CD4-positive, alpha-beta memory T cell (primary cell): ENCODE measurements at regions of chr5 and their contacts with region 1.

Region 1: DNA sequence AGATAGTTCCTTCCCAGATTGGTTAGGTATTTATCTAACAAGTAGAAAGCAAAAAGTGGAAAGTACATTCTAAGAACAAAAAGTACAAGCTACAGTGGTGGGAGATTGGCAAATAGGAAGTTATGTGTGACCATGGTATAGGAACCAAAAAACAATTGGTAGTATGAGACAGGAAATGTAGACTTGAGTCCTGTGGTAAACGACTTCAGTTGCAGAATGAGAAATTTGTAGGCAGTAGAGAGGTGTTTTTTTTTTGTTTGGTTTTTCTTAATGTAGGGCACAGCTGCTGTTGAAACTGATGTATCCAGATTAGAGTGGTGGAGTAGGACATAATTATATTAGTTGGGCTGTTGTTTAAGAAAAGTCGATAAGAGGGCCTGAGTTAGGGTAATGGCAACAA is 72.0 kb downstream of the CCNH start:
- DNase-seq: peak in 4 of 5 donors; percentile 50 to 75 (median 63)
- H3K4me3 ChIP-seq: no peak overlapping the region
- H3K4me3 Mint-ChIP-seq: peak overlapping the region; percentile 59 to 84 (median 74)
- H3K27ac ChIP-seq: peak overlapping the region; percentile 56
- H3K27ac Mint-ChIP-seq: peak overlapping the region; percentile 65 to 96 (median 85)
- H3K4me1 ChIP-seq: peaks cover 29% of the 10 kb centered on the region
- H3K4me1 Mint-ChIP-seq: peaks cover 16 to 34% (median 22%) of the 10 kb centered on the region in 4 donors
- H3K27me3 ChIP-seq: no peaks in the 10 kb centered on the region
- H3K27me3 Mint-ChIP-seq: no peaks in the 10 kb centered on the region

Region 2: DNA sequence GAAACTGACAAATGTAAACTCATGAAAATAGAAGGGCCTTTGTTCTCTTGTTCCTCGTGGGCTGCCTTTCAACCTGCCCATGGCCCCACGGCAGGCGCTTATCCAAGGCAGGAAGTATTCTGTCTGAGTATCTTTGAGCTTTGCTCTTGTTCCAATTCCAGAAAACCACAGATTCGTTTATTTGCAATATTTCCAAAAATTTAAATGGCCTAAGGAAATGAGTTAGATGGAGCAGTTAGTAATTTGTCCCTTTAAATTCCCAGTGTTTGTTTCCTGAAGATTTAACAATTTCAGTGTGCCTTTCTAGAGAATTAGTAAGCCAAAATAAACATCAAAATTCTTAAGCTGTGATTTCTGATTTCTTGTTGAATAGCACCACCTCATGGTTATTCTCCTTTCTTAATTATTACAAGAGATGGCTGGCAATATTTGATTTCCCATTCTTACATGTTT is 372.4 kb before region 1 on chr5:
- CTCF ChIA-PET with region 1: no interaction called
- POLR2A ChIA-PET with region 1: no interaction called
- intact Hi-C with region 1: loop called (anchors 2 kb)
- DNase-seq: peak in 4 of 5 donors; percentile 21 to 25 (median 24)
- H3K4me3 ChIP-seq: no peak overlapping the region
- H3K4me3 Mint-ChIP-seq: no peak overlapping the region
- H3K27ac ChIP-seq: no peak overlapping the region
- H3K27ac Mint-ChIP-seq: peak overlapping the region in 1 of 7 donors; percentile 24
- H3K4me1 ChIP-seq: no peaks in the 10 kb centered on the region
- H3K4me1 Mint-ChIP-seq: peaks cover 0 to 10% (median 5%) of the 10 kb centered on the region in 4 donors
- H3K27me3 ChIP-seq: no peaks in the 10 kb centered on the region
- H3K27me3 Mint-ChIP-seq: peaks cover 2 to 5% of the 10 kb centered on the region in 2 donors

Region 3: GRCh38 chr5:87282269-87282668 is 58.4 kb before region 1 on chr5:
- CTCF ChIA-PET with region 1: no interaction called
- POLR2A ChIA-PET with region 1: no interaction called
- intact Hi-C with region 1: loop called (anchors 5 kb)
- DNase-seq: peak in 4 of 5 donors; percentile 47 to 64 (median 56)
- H3K4me3 ChIP-seq: peak overlapping the region in 1 of 2 donors; percentile 27
- H3K4me3 Mint-ChIP-seq: peak overlapping the region; percentile 75 to 90 (median 86)
- H3K27ac ChIP-seq: peak overlapping the region; percentile 63
- H3K27ac Mint-ChIP-seq: peak overlapping the region; percentile 71 to 97 (median 92)
- H3K4me1 ChIP-seq: peaks cover 44% of the 10 kb centered on the region
- H3K4me1 Mint-ChIP-seq: peaks cover 37 to 70% (median 50%) of the 10 kb centered on the region in 4 donors
- H3K27me3 ChIP-seq: no peaks in the 10 kb centered on the region
- H3K27me3 Mint-ChIP-seq: no peaks in the 10 kb centered on the region

Region 4: DNA sequence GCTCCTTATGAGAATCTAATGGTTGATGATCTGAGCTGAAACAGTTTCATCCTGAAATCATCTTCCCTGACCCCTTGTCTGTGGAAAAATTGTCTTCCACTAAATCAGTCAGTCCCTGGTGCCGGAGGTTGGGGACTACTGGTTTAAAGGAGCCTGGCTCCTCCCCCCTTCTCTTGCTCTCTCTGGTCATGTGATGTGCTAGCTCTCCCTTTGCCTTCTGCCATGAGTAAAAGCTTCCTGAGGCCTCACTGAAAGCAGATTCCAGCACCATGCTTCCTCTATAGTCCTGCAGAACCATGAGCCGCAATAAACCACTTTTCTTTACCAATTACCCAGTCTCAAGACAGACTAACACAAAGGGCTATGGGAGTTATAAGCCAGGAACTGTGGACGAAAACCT is 18.3 kb before region 1 on chr5:
- CTCF ChIA-PET with region 1: no interaction called
- POLR2A ChIA-PET with region 1: no interaction called
- intact Hi-C with region 1: loop called (anchors 2 kb)
- DNase-seq: no peak
- H3K4me3 ChIP-seq: no peak overlapping the region
- H3K4me3 Mint-ChIP-seq: no peak overlapping the region
- H3K27ac ChIP-seq: no peak overlapping the region
- H3K27ac Mint-ChIP-seq: peak overlapping the region in 2 of 7 donors; percentile 27 to 72
- H3K4me1 ChIP-seq: peaks cover 32% of the 10 kb centered on the region
- H3K4me1 Mint-ChIP-seq: peaks cover 49 to 86% (median 68%) of the 10 kb centered on the region in 4 donors
- H3K27me3 ChIP-seq: no peaks in the 10 kb centered on the region
- H3K27me3 Mint-ChIP-seq: no peaks in the 10 kb centered on the region

Region 5: DNA sequence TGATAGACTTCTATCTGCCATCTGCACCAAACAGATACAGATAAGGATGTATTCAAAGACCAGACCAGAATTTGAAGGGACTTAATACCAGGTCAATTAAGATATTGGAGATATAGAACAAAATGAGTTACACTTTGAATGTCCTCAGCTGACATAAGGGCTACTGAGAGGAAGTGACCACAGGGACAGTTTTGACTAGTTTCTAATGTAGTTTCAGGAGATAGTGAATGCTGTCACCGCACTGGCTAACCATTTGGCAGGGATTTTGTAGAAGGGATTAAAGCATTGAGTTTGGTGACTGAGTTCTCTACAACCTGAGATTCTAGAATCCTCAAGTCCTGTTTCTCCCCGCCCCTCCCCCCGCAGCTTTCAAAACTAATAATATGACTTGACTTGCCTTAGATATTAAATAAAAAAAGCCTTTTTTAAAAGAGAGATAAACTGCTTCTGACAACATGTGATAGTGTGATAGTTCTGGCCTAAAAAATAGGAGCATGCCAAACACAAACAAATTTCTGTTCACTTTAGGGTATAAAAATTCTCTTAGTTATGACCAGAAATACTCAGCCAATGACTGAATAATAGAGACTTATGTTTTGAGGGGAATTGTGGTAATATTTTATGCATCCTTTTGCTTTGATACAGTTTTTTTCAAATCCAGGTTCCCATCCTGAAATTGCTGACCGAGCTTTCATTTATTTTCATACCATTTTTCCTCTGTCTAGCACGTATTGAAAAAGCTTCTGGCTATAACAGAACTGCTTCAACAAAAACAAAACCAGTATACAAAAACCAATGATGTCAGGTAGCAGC is 49.6 kb after region 1 on chr5:
- CTCF ChIA-PET with region 1: no interaction called
- POLR2A ChIA-PET with region 1: no interaction called
- intact Hi-C with region 1: loop called (anchors 2 kb)
- DNase-seq: no peak
- H3K4me3 ChIP-seq: no peak overlapping the region
- H3K4me3 Mint-ChIP-seq: no peak overlapping the region
- H3K27ac ChIP-seq: no peak overlapping the region
- H3K27ac Mint-ChIP-seq: peak overlapping the region in 5 of 7 donors; percentile 49 to 65 (median 54)
- H3K4me1 ChIP-seq: no peaks in the 10 kb centered on the region
- H3K4me1 Mint-ChIP-seq: peaks cover 11 to 37% (median 20%) of the 10 kb centered on the region in 4 donors
- H3K27me3 ChIP-seq: no peaks in the 10 kb centered on the region
- H3K27me3 Mint-ChIP-seq: no peaks in the 10 kb centered on the region